Right ventricle myocardium superior (tissue), 1 donor: ENCODE measurements at regions of chr7 and their contacts with region 1.

Region 1: GRCh38 chr7:65239707-65240352 is 133.8 kb upstream of the ZNF92 start:
- DNase-seq: peak; percentile 50
- ATAC-seq: peak; percentile 94

Region 2: DNA sequence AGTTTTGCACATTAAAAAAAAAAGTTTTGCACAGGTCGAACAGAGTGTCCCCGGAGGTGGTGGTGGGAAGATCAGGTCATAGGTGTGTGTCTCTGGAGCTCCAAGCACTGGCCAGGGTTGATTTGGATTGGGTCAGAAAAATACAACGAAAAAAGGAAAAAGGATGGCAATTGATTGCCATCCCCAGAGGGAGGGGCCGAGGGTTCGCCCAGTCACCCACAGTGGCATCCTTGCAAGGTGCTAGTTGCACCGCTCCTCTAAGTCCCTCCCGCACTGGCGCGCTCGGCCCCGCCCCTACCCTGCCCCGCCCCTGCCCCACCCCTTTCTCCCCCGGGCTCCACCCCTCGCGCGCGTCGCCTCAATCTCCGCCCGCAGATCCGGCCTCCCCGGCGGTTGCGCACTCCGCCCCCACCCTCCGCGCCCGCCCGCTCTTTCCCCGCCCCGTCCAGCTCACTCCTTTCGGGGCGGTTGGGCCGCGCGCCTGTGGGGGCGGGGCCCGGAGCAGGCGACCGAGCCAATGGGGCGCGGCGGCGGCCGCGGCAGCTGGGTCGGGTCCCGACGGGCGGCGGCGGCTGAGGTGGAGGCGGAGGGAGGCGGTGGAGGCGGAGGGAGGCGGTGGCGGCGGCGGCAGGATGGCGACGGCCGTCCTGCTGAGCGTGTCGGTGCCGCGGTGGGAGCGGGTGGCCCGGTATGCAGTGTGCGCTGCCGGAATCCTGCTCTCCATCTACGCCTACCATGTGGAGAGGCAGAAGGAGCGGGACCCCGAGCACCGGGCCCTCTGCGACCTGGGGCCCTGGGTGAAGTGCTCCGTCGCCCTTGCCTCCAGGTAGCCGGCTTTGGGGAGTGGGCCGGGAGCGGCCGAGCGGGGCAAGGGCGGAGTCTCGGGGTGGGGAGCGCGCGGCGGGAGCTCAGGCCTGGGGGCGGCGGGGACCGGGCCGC is 201.8 kb before region 1 on chr7:
- intact Hi-C with region 1: loop called (anchors 5 kb)
- DNase-seq: peak; percentile 95
- ATAC-seq: peak; percentile 95

Region 3: GRCh38 chr7:66654123-66654732 is 1414.4 kb after region 1 on chr7:
- intact Hi-C with region 1: no loop called
- DNase-seq: peak; percentile 99
- ATAC-seq: peak; percentile 98